HEK293 (cell line): ENCODE measurements at regions of chrX and their contacts with region 1.

Region 1: DNA sequence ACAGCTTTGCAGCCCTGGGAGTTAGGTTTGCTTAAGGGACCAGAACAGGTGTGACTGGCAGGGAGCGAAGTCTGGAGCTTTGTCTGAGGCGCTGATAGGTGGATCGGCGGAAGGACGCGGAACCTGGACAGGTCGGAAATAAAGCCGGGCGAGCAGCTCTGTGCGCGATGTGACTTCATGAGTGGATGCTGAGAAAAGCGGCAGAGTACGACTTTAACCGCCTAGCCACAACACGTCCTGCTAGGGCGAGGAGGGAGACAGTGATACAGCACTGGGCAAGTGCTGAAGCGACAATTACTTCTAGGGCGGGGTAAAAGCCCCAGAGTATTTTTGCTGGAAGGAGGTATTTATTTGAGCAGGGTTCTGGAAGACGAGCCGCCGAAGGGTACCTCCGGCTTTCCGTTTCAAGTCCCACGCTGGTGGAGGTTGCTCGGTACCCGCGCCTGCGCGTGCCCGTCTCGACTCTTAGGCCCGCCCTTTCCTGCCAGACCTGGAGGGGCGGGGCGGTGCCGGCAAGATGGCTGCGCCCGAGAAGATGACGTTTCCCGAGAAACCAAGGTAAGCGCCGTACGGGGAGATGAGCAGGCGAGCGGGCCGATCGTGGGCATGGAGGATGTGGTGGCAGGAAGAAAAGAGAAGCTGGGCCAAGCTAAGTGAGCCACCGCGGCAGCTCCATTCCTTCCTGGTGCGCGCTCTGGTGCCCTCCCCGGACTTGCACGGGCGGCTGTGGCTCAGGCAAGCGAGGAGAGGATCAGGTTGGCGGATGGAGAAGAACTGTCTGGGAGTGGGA is at the start of gene ZRSR2:
- H3K4me3 ChIP-seq: peak within 1 kb of the TSS; percentile 79
- H3K27ac ChIP-seq: peak within 1 kb of the TSS; percentile 71
- H3K4me1 ChIP-seq: peaks cover 4% of the 10 kb centered on the region; the same call in 1 of the 2 replicates
- CTCF ChIP-seq: no peak

Region 2: GRCh38 chrX:15633276-15633868 is 156.8 kb before region 1 on chrX:
- CTCF ChIA-PET with region 1: no interaction called
- POLR2A ChIA-PET with region 1: no interaction called
- H3K4me3 ChIP-seq: no peak overlapping the region
- H3K27ac ChIP-seq: no peak overlapping the region
- H3K4me1 ChIP-seq: no peaks in the 10 kb centered on the region
- CTCF ChIP-seq: no peak

Region 3: GRCh38 chrX:15737960-15738902 is 51.9 kb before region 1 on chrX and contains the start of gene CA5B:
- CTCF ChIA-PET with region 1: no interaction called
- POLR2A ChIA-PET with region 1: interaction called, 13 read pairs
- H3K4me3 ChIP-seq: peak within 1 kb of the TSS; percentile 58
- H3K27ac ChIP-seq: no peak within 1 kb of the TSS; the same call in 1 of the 2 replicates
- H3K4me1 ChIP-seq: peaks cover 17% of the 10 kb centered on the region
- CTCF ChIP-seq: peak; percentile 29; the same call in 1 of the 2 replicates

Region 4: GRCh38 chrX:15854712-15855567 is 64.8 kb after region 1 on chrX and contains the start of gene AP1S2:
- CTCF ChIA-PET with region 1: no interaction called
- POLR2A ChIA-PET with region 1: interaction called, 15 read pairs
- H3K4me3 ChIP-seq: peak within 1 kb of the TSS; percentile 97
- H3K27ac ChIP-seq: peak within 1 kb of the TSS; percentile 82
- H3K4me1 ChIP-seq: peaks cover 7% of the 10 kb centered on the region; the same call in 1 of the 2 replicates
- CTCF ChIP-seq: no peak